ENCODE measurements at regions of chr1 and their contacts with region 1.

Region 1: DNA sequence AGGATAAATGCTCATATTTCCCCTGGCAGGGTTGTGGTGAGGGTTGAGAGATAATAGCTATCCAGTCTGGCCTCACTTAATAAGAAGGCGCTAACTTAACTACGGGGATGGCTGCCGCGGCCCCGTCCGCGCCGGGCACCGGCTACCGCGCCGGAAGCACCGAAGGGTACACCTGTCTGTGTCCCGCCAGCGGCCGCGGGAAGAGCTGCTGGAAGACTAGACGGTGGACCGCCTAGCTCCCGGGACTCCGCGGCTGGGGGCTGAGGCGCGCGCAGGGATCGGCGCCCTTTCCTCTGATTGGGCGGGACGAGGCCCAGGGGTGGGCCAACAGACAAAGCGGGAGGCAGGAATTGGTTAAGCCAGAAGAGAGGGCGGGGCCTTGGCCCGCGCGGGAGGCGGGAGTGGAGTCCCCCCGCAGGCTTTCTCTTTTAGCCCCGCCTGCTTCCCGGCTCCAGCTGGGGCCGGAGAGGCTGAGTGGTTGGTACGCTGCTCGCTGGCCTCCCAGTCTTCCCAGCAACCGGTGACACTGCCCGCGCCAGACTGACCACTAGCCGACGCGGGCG is at the start of gene ZNF672:
- DNase-seq: peak; percentile 92 to 96
- ATAC-seq: peak; percentile 80 to 93 (median 80)
- H3K4me3 ChIP-seq: peak within 1 kb of the TSS; percentile 80
- H3K4me3 Mint-ChIP-seq: no peak within 1 kb of the TSS
- H3K27ac ChIP-seq: peak within 1 kb of the TSS; percentile 99
- H3K27ac Mint-ChIP-seq: no peak within 1 kb of the TSS
- H3K4me1 ChIP-seq: peaks cover 24% of the 10 kb centered on the region
- H3K4me1 Mint-ChIP-seq: peaks cover 10 to 27% of the 10 kb centered on the region in 2 donors
- H3K27me3 ChIP-seq: no peaks in the 10 kb centered on the region
- H3K27me3 Mint-ChIP-seq: peaks cover 5% of the 10 kb centered on the region in 2 donors
- CTCF ChIP-seq: no peak
- total RNA-seq, gene ZNF672: 29.0 to 41.8 (median 38.7) TPM

Region 2: GRCh38 chr1:248825909-248826760 is 11.7 kb before region 1 on chr1 and contains the start of gene SH3BP5L:
- intact Hi-C with region 1: loop called (anchors 1 kb)
- DNase-seq: peak; percentile 87 to 96
- ATAC-seq: peak; percentile 85 to 95 (median 87)
- H3K4me3 ChIP-seq: peak within 1 kb of the TSS; percentile 93
- H3K4me3 Mint-ChIP-seq: peak within 1 kb of the TSS; percentile 96
- H3K27ac ChIP-seq: peak within 1 kb of the TSS; percentile 99
- H3K27ac Mint-ChIP-seq: peak within 1 kb of the TSS; percentile 96
- H3K4me1 ChIP-seq: peaks cover 46% of the 10 kb centered on the region
- H3K4me1 Mint-ChIP-seq: peaks cover 55 to 56% of the 10 kb centered on the region in 2 donors
- H3K27me3 ChIP-seq: no peaks in the 10 kb centered on the region
- H3K27me3 Mint-ChIP-seq: no peaks in the 10 kb centered on the region
- CTCF ChIP-seq: peak; percentile 79
- total RNA-seq, gene SH3BP5L: 19.0 to 27.5 (median 22.9) TPM

Region 3: DNA sequence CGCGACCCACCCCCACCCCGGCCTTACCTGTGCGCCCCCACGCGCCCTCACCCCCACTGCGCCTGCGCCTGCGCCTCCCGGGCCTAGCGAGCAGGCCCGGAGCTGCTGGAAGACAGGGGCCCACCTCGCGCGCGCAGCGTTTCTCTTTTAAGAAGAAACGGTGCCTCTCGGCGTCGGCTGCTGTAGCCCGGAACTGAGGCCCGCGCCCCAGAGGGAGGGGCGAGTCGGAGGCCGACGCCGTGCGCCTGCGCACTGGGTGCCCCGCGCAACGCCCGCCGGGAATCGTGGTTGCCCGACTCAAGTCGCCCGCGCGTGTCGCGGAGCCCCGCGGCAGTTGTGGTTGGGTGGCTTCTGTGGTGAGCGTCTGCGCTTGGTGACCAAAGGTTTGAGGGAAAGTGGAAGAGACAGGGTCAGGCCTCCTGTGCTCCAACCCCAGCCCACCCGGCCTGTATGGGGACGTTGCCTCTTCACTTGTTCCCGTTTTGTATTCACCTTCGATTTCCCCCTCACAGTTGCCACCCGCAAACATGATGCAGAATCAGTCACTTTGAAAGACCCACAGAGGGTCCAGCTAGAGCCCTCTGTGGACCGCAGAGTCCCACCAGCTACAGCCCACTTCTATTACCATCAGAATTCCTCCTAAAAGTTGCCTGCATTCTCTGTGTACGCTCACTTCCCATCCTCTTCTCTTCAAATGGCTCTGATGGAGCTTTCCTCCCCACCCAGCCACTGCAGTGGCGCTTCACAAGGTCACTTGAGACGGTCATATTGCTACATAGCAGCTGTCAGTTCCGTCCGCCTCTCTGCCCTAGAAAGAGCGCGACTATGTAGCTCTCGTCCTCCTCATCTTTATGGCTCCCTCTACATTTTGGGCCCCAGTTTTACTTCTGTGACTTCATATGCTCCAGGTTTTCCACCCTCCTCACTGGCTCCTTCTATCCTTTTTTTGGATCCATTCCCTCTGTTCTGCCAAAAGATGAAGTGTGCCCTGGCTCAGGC is 21.3 kb after region 1 on chr1 and contains the start of gene ZNF692:
- intact Hi-C with region 1: loop called (anchors 1 kb)
- DNase-seq: peak; percentile 95 to 98
- ATAC-seq: peak; percentile 85 to 94 (median 88)
- H3K4me3 ChIP-seq: peak within 1 kb of the TSS; percentile 66
- H3K4me3 Mint-ChIP-seq: peak within 1 kb of the TSS; percentile 86
- H3K27ac ChIP-seq: peak within 1 kb of the TSS; percentile 92
- H3K27ac Mint-ChIP-seq: peak within 1 kb of the TSS; percentile 90 to 94
- H3K4me1 ChIP-seq: peaks cover 64% of the 10 kb centered on the region
- H3K4me1 Mint-ChIP-seq: peaks cover 47 to 60% of the 10 kb centered on the region in 2 donors
- H3K27me3 ChIP-seq: no peaks in the 10 kb centered on the region
- H3K27me3 Mint-ChIP-seq: no peaks in the 10 kb centered on the region
- CTCF ChIP-seq: peak; percentile 5
- total RNA-seq, gene ZNF692: 50.4 to 58.7 (median 52.3) TPM

Region 4: GRCh38 chr1:248873409-248873992 is 35.6 kb after region 1 on chr1:
- intact Hi-C with region 1: loop called (anchors 1 kb)
- DNase-seq: peak; percentile 91 to 95
- ATAC-seq: peak; percentile 78 to 87 (median 82)
- H3K4me3 ChIP-seq: peak overlapping the region; percentile 86
- H3K4me3 Mint-ChIP-seq: peak overlapping the region; percentile 99
- H3K27ac ChIP-seq: peak overlapping the region; percentile 83
- H3K27ac Mint-ChIP-seq: peak overlapping the region; percentile 94 to 100
- H3K4me1 ChIP-seq: peaks cover 17% of the 10 kb centered on the region
- H3K4me1 Mint-ChIP-seq: peaks cover 20 to 22% of the 10 kb centered on the region in 2 donors
- H3K27me3 ChIP-seq: no peaks in the 10 kb centered on the region
- H3K27me3 Mint-ChIP-seq: no peaks in the 10 kb centered on the region
- CTCF ChIP-seq: no peak

Region 5: GRCh38 chr1:248906009-248906752 is 68.3 kb after region 1 on chr1 and contains the start of gene PGBD2:
- intact Hi-C with region 1: loop called (anchors 1 kb)
- DNase-seq: peak; percentile 92 to 96
- ATAC-seq: peak; percentile 82 to 90 (median 84)
- H3K4me3 ChIP-seq: peak within 1 kb of the TSS; percentile 70
- H3K4me3 Mint-ChIP-seq: peak within 1 kb of the TSS; percentile 94
- H3K27ac ChIP-seq: peak within 1 kb of the TSS; percentile 90
- H3K27ac Mint-ChIP-seq: peak within 1 kb of the TSS; percentile 92 to 93
- H3K4me1 ChIP-seq: peaks cover 14% of the 10 kb centered on the region
- H3K4me1 Mint-ChIP-seq: peaks cover 30 to 33% of the 10 kb centered on the region in 2 donors
- H3K27me3 ChIP-seq: no peaks in the 10 kb centered on the region
- H3K27me3 Mint-ChIP-seq: peaks cover 5 to 12% of the 10 kb centered on the region in 2 donors
- CTCF ChIP-seq: peak; percentile 56
- total RNA-seq, gene PGBD2: 3.1 to 9.2 (median 6.2) TPM